Activated CD8-positive, alpha-beta memory T cell treated with anti-CD3 and anti-CD28 coated beads, Interleukin-2, amount 10 ng/mL, durations not matched to agents 7 days and 5 days (primary cell): ENCODE measurements at regions of chr12 and their contacts with region 1.

Region 1: DNA sequence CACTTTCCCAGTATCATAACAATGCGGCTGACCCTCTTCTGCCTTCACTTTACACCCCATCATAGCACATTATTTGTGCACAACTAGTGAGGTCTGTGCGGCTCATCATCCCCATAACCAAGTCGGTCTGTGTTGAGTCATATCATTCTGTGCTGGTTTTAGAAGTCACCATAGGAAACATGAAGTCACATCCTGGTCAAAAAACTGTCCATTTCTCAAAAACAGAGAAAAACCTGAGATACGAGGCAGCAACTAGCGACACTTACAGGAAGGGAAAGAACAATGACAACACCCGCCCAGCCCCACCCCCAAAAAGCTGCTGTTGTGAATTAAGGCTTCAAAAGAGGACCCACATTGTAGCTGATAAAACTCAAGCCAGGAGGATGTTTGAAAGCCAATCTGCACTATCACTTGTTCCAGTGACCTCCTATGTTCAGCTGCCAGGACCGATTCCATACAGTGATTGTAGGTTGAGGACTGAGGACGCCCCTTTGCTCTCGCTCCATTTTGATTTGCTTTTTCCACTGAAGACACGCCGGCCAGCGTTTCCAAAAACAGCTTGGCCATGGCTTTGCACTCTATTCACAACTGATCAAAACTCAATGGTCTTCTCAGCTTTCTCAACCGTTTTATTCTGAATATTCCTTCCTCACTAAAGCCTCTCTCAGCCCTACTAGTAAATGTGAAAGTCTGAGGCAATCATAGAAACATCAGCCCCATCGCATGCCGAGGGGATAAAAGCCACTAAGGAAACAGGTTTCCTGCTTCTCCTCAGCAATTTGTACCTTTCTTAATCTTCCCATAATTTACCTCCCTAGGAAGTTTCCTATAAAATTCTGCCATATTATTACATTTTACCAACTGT is 87.5 kb downstream of the DUSP16 start:
- DNase-seq: peak; percentile 89
- ATAC-seq: peak; percentile 86
- H3K4me3 Mint-ChIP-seq: peak overlapping the region; percentile 65
- H3K27ac Mint-ChIP-seq: peak overlapping the region; percentile 99
- H3K4me1 Mint-ChIP-seq: peaks cover 83% of the 10 kb centered on the region
- H3K27me3 Mint-ChIP-seq: no peaks in the 10 kb centered on the region

Region 2: DNA sequence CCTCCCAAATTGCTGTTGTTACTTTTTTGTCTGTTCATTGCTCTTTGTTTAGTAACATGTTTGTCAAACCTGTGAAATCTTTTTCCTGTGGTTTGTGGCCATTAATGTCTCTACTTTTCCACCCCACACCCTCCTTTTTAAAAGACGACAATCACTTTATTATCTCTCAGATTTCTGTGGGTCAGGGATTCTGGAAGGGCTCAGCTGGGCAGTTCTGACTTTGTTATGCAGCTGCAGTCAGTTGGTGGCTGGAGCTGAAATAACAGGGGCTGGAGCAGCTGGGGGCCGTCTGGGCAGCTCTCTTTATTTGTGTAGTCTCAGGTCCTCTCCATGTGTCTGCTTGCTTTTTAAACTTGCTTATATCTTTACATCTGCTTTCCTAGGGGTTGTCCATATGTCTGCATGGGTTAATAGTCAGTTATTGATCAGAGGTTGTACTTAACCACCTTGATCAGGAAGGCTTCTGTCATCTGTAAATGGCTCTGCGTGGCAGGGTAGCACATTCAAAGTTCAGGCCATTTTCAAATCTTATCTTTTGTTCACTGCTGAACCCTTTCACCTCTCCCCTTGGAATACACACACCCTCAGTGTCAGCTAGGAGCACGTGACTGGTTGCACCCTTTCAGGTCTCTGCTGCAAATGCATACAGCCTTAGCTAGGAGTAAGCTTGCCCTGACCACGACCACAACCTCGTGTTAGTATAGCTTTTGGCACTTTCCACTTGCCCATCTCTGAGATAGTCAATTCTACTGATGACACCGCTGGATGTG is 90.4 kb before region 1 on chr12:
- CTCF ChIA-PET with region 1: interaction called, 28 read pairs
- DNase-seq: peak; percentile 96
- ATAC-seq: peak; percentile 88
- H3K4me3 Mint-ChIP-seq: peak overlapping the region; percentile 38
- H3K27ac Mint-ChIP-seq: peak overlapping the region; percentile 94
- H3K4me1 Mint-ChIP-seq: peaks cover 75% of the 10 kb centered on the region
- H3K27me3 Mint-ChIP-seq: no peaks in the 10 kb centered on the region

Region 3: DNA sequence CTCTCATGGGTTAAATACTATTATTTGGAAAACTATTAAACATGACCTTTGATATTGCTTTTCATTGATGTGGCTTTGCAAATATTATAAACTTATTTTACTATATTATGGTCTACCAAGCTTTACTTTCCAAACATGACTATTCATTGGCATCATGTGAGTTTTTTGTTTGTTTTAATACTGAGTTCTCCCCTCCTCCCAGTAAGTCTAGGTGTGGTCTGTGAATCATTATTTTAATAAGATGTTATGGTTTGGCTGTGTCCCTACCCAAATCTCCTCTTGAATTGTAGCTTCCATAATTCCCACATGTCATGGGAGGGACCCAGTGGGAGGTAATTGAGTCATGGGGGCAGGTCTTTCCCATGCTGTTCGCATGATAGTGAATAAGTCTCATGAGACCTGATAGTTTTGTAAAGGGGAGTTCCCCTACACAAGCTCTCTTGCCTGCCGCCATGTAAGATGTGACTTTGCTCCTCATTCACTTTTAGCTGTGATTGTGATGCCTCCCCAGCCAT is 38.3 kb before region 1 on chr12:
- CTCF ChIA-PET with region 1: interaction called, 65 read pairs
- DNase-seq: no peak
- ATAC-seq: no peak
- H3K4me3 Mint-ChIP-seq: no peak overlapping the region
- H3K27ac Mint-ChIP-seq: no peak overlapping the region
- H3K4me1 Mint-ChIP-seq: peaks cover 80% of the 10 kb centered on the region
- H3K27me3 Mint-ChIP-seq: no peaks in the 10 kb centered on the region

Region 4: GRCh38 chr12:12442548-12443071 is 32.6 kb before region 1 on chr12:
- CTCF ChIA-PET with region 1: interaction called, 65 read pairs
- DNase-seq: no peak
- ATAC-seq: no peak
- H3K4me3 Mint-ChIP-seq: peak overlapping the region; percentile 54
- H3K27ac Mint-ChIP-seq: peak overlapping the region; percentile 100
- H3K4me1 Mint-ChIP-seq: peaks cover 86% of the 10 kb centered on the region
- H3K27me3 Mint-ChIP-seq: no peaks in the 10 kb centered on the region

Region 5: DNA sequence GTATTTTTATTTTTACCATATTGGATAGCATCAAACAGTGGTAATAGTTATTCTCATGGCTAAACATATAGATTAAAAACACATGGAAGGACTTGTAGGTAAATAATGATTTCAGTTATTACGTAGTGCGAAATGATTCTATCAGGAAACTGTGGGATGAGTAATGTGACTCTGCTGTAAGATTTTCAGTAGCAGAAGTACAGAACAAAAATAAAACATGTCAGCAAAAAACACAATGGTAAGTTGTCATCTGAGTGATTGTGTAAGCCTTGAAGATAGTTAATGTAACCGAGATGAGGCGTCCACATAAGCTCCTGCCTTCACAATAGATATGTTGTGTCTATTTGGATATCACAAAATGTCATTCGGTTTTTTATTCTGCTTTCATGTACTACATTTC is 18.5 kb before region 1 on chr12:
- CTCF ChIA-PET with region 1: interaction called, 21 read pairs
- DNase-seq: peak; percentile 36
- ATAC-seq: peak; percentile 61
- H3K4me3 Mint-ChIP-seq: peak overlapping the region; percentile 56
- H3K27ac Mint-ChIP-seq: peak overlapping the region; percentile 91
- H3K4me1 Mint-ChIP-seq: peaks cover 43% of the 10 kb centered on the region
- H3K27me3 Mint-ChIP-seq: no peaks in the 10 kb centered on the region

Region 6: GRCh38 chr12:12562585-12563261 is 87.6 kb after region 1 on chr12 and contains the start of gene DUSP16:
- CTCF ChIA-PET with region 1: interaction called, 11 read pairs
- DNase-seq: peak; percentile 91
- ATAC-seq: peak; percentile 89
- H3K4me3 Mint-ChIP-seq: peak within 1 kb of the TSS; percentile 81
- H3K27ac Mint-ChIP-seq: peak within 1 kb of the TSS; percentile 95
- H3K4me1 Mint-ChIP-seq: peaks cover 38% of the 10 kb centered on the region
- H3K27me3 Mint-ChIP-seq: no peaks in the 10 kb centered on the region
- total RNA-seq, gene DUSP16: 43.0 to 69.0 TPM

Region 7: DNA sequence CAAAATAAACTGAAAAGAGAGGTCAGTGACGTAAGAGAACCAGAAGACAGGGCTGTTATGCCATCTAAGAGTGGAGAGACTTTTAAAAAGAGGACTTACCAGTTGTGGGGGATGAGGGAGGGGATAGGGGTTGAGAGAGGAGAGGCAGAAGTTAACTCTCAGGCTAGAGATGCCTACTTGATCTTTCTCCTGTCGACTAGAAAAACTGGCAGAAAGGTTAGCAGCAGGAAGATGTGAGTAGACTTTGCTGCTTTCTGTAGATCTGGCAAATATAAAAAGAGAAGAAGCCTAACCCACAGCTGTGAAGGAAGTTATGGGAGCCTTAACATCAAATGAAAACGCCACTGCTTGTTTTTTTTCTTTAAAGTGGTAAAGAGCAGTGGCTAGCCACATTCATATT is 147.3 kb after region 1 on chr12:
- CTCF ChIA-PET with region 1: no interaction called
- DNase-seq: no peak
- ATAC-seq: peak; percentile 58
- H3K4me3 Mint-ChIP-seq: peak overlapping the region; percentile 5
- H3K27ac Mint-ChIP-seq: peak overlapping the region; percentile 75
- H3K4me1 Mint-ChIP-seq: peaks cover 25% of the 10 kb centered on the region
- H3K27me3 Mint-ChIP-seq: no peaks in the 10 kb centered on the region